GM12878 (cell line): ENCODE measurements at regions of chr4 and their contacts with region 1.

Region 1: GRCh38 chr4:71270901-71271300 is 67.9 kb upstream of the SLC4A4 start:
- DNase-seq: no peak
- ATAC-seq: peak; percentile 76
- H3K4me3 ChIP-seq: no peak overlapping the region
- H3K27ac ChIP-seq: no peak overlapping the region
- H3K4me1 ChIP-seq: peaks cover 3% of the 10 kb centered on the region; the same call in 1 of the 2 replicates
- H3K27me3 ChIP-seq: no peaks in the 10 kb centered on the region
- CTCF ChIP-seq: peak; percentile 41 to 62 (median 41); a peak in 4 of 6 replicates
- EP300 ChIP-seq: no peak
- POLR2A ChIP-seq: no peak
- RAD21 ChIP-seq: peak; percentile 74

Region 2: DNA sequence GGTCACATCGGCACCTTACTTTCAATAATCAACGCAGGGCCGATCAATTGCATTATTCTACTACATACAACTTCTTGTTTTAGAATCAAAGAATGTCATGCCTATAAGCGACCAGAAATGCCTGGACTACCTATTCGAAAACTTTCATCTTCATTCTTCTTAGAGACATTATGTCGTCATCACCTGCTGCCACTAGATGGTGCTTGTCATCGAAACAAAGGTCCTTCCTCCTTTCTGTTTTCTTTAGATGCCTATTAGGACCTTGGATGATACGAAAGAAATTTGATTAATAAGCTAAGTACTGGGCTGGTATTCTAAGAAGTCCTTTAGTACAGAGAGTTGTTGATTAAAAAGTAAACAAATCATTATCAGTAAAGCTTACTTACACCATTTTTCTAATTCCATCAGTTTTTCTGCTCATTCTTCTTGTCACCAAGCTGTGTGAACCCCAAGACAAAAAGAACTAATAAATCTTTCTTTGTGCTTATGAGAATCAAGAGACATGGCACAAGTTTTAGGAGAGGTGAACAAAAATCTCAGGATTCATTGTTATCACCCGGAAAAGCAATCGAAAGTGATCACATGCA is 86.6 kb before region 1 on chr4:
- CTCF ChIA-PET with region 1: interaction called, 11 read pairs
- POLR2A ChIA-PET with region 1: no interaction called
- RAD21 ChIA-PET with region 1: no interaction called
- SMC1A ChIA-PET with region 1: interaction called, 3 read pairs
- in situ Hi-C with region 1: no loop called
- intact Hi-C with region 1: no loop called
- DNase-seq: peak; percentile 13
- ATAC-seq: peak; percentile 90
- H3K4me3 ChIP-seq: no peak overlapping the region
- H3K27ac ChIP-seq: no peak overlapping the region
- H3K4me1 ChIP-seq: no peaks in the 10 kb centered on the region
- H3K27me3 ChIP-seq: peaks cover 5 to 24% of the 10 kb centered on the region in 2 experiments
- CTCF ChIP-seq: peak; percentile 64 to 75 (median 72)
- EP300 ChIP-seq: no peak
- POLR2A ChIP-seq: no peak
- RAD21 ChIP-seq: peak; percentile 75

Region 3: DNA sequence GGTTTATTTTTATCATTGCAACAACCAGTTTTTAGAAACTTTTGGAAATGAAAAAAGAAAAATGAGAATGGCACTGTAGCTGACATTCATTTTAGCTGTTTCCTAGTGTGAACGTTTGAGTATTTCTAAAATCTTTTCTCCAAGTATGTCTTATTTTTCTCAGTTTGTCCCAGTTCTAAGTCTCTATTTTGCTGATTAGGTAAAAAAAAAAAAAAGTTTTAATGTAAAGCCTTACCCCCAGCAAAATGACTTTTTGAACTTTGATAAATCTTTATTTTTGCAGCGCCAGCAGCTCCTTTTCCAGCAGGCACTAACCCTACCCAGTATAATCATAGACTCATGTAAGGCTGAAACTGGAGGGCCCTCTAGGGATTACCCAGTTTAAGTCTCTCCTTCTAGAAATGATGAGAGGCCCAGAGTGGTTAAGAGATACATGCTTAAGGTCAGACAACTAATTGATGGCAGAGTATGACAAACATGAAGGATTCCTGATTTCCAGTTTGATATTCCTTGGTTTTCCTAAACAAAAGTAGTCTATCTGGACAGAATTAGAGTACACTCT is 16.4 kb before region 1 on chr4:
- CTCF ChIA-PET with region 1: interaction called, 34 read pairs
- POLR2A ChIA-PET with region 1: interaction called, 3 read pairs
- RAD21 ChIA-PET with region 1: interaction called, 11 read pairs
- SMC1A ChIA-PET with region 1: interaction called, 17 read pairs
- in situ Hi-C with region 1: no loop called
- intact Hi-C with region 1: no loop called
- DNase-seq: no peak
- ATAC-seq: peak; percentile 86
- H3K4me3 ChIP-seq: no peak overlapping the region
- H3K27ac ChIP-seq: no peak overlapping the region
- H3K4me1 ChIP-seq: no peaks in the 10 kb centered on the region
- H3K27me3 ChIP-seq: no peaks in the 10 kb centered on the region
- CTCF ChIP-seq: no peak; a peak in 1 of 6 replicates
- EP300 ChIP-seq: no peak
- POLR2A ChIP-seq: no peak
- RAD21 ChIP-seq: peak; percentile 55; the same call in 1 of the 2 replicates

Region 4: GRCh38 chr4:71283642-71284257 is 12.8 kb after region 1 on chr4:
- CTCF ChIA-PET with region 1: interaction called, 13 read pairs
- POLR2A ChIA-PET with region 1: no interaction called
- RAD21 ChIA-PET with region 1: no interaction called
- SMC1A ChIA-PET with region 1: interaction called, 4 read pairs
- in situ Hi-C with region 1: no loop called
- intact Hi-C with region 1: no loop called
- DNase-seq: no peak
- ATAC-seq: no peak
- H3K4me3 ChIP-seq: no peak overlapping the region
- H3K27ac ChIP-seq: no peak overlapping the region
- H3K4me1 ChIP-seq: no peaks in the 10 kb centered on the region
- H3K27me3 ChIP-seq: no peaks in the 10 kb centered on the region; a peak in 1 of 4 replicates
- CTCF ChIP-seq: no peak
- EP300 ChIP-seq: no peak
- POLR2A ChIP-seq: no peak
- RAD21 ChIP-seq: no peak

Region 5: GRCh38 chr4:71713611-71714203 is 442.8 kb after region 1 on chr4:
- CTCF ChIA-PET with region 1: interaction called, 53 read pairs
- POLR2A ChIA-PET with region 1: no interaction called
- RAD21 ChIA-PET with region 1: interaction called, 8 read pairs
- SMC1A ChIA-PET with region 1: interaction called, 21 read pairs
- in situ Hi-C with region 1: no loop called
- intact Hi-C with region 1: loop called (anchors 1 kb)
- DNase-seq: no peak
- ATAC-seq: peak; percentile 70
- H3K4me3 ChIP-seq: no peak overlapping the region
- H3K27ac ChIP-seq: no peak overlapping the region
- H3K4me1 ChIP-seq: no peaks in the 10 kb centered on the region
- H3K27me3 ChIP-seq: no peaks in the 10 kb centered on the region
- CTCF ChIP-seq: peak; percentile 33 to 66 (median 46); a peak in 5 of 6 replicates
- EP300 ChIP-seq: no peak
- POLR2A ChIP-seq: no peak
- RAD21 ChIP-seq: peak; percentile 86

Region 6: GRCh38 chr4:72302981-72303704 is 1032.2 kb after region 1 on chr4:
- CTCF ChIA-PET with region 1: interaction called, 3 read pairs
- POLR2A ChIA-PET with region 1: no interaction called
- RAD21 ChIA-PET with region 1: no interaction called
- SMC1A ChIA-PET with region 1: interaction called, 4 read pairs
- in situ Hi-C with region 1: no loop called
- intact Hi-C with region 1: loop called (anchors 5 kb)
- DNase-seq: no peak
- ATAC-seq: peak; percentile 99
- H3K4me3 ChIP-seq: no peak overlapping the region
- H3K27ac ChIP-seq: no peak overlapping the region
- H3K4me1 ChIP-seq: no peaks in the 10 kb centered on the region
- H3K27me3 ChIP-seq: no peaks in the 10 kb centered on the region
- CTCF ChIP-seq: peak; percentile 63 to 69 (median 69)
- EP300 ChIP-seq: no peak
- POLR2A ChIP-seq: no peak
- RAD21 ChIP-seq: peak; percentile 67